Natural killer cell (primary cell): ENCODE measurements at regions of chr4 and their contacts with region 1.

Region 1: GRCh38 chr4:169619959-169620879 is at the start of gene CLCN3:
- DNase-seq: peak; percentile 94
- ATAC-seq: peak; percentile 81 to 94 (median 86)
- H3K4me3 ChIP-seq: peak within 1 kb of the TSS; percentile 63
- H3K4me3 Mint-ChIP-seq: peak within 1 kb of the TSS; percentile 95
- H3K27ac ChIP-seq: peak within 1 kb of the TSS; percentile 97
- H3K27ac Mint-ChIP-seq: peak within 1 kb of the TSS; percentile 99 to 100
- H3K4me1 ChIP-seq: peaks cover 9% of the 10 kb centered on the region
- H3K4me1 Mint-ChIP-seq: peaks cover 50 to 55% of the 10 kb centered on the region in 2 donors
- H3K27me3 ChIP-seq: no peaks in the 10 kb centered on the region
- H3K27me3 Mint-ChIP-seq: no peaks in the 10 kb centered on the region
- CTCF ChIP-seq: no peak
- total RNA-seq, gene CLCN3: 20.7 to 26.0 (median 21.0) TPM

Region 2: DNA sequence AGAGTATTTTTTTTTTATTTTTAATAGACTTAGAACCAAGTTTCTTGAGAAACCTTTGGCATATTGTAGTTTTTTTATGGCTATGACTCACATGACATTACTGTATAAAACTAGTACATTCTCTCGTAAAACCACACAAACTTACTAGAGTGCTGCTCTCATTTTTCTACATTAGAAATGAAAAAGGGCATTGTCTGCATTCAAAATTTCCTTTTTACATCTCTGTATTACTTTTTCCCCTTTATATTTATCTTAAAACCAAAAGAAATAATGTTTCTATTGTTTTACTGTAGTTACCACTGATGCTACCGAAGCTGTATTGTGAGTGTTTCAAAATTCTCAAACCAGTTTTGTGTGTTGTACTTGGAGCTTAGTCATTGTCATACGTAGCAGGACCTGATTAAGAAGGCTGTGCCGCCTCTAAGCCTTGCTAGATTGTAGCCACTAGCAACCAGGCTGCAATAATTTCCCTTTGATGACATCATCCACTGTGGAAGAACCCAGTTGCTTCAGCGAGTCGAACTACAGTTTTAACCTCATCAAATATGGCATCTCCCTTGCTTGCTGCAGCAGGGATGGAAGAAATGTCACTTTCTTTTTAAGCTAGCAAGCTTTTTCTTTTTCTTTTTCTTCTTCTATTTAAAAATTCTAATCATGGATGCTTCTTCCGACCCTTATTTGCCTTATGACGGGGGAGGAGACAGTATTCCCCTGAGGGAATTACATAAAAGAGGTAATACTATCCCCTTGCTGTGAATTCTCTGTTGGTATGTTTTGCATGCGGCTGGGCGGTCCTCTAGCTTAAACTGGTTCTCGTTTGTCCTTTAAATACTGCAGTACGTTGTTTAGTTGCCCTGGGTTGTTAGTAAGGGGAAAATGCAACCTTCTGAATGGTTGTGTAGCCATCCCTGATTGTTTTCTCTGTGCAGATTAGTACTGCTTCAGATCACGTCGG is 39.8 kb after region 1 on chr4:
- intact Hi-C with region 1: loop called (anchors 1 kb)
- DNase-seq: peak; percentile 35 to 88
- ATAC-seq: peak; percentile 94 to 98 (median 96)
- H3K4me3 ChIP-seq: peak overlapping the region; percentile 31
- H3K4me3 Mint-ChIP-seq: peak overlapping the region; percentile 85
- H3K27ac ChIP-seq: peak overlapping the region; percentile 78
- H3K27ac Mint-ChIP-seq: peak overlapping the region; percentile 93
- H3K4me1 ChIP-seq: peaks cover 4% of the 10 kb centered on the region
- H3K4me1 Mint-ChIP-seq: peaks cover 12 to 27% of the 10 kb centered on the region in 2 donors
- H3K27me3 ChIP-seq: no peaks in the 10 kb centered on the region
- H3K27me3 Mint-ChIP-seq: no peaks in the 10 kb centered on the region
- CTCF ChIP-seq: no peak